IMR-90 (cell line): ENCODE measurements at regions of chr14 and their contacts with region 1.

Region 1: DNA sequence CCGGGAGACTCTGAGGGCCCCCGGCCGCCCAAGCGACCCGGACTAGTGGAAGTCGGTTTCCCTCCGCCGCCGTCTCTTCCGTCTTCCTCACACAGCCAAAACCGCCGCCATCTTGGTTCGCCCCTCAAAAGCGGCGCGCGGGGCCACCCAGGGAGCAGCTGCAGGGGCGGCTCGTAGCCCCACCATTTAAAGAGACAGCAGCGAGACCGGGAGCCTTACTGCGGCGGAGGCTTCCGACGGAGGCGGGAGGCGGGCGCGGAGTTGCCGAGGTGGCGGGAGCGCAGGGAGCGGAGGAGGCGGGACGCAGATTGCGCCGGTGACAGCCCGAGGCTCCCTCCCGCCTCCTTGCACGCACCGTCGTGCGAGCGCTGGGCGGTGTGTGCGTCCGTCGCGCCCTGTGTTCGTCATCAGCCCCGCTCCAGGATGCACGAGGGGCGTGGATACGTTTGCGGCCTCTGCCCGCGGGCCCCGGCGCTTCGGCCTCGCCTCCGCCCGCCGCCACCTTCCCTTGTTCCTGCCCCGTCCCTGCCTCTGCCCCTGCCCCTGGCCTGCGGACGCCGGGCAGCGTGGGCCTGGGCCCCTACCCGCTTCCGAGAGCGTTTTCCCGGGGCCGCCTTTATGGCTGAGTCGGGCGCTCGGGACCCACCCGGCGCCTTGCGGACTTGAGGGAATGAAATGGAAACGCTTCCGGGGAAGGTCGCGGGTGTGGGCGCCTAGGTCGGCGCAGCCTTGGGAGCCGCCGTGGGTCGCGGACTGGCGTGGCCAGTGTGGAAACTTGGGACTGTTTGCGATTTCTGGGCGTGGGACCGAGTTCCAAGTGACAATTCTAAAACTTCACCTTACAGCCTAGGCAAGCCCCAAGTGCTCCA is at the start of gene PPP4R3A:
- DNase-seq: peak; percentile 98
- ATAC-seq: peak; percentile 91
- H3K4me3 ChIP-seq: peak within 1 kb of the TSS; percentile 100
- H3K27ac ChIP-seq: peak within 1 kb of the TSS; percentile 96
- H3K4me1 ChIP-seq: peaks cover 3% of the 10 kb centered on the region; the same call in 1 of the 2 replicates
- H3K27me3 ChIP-seq: no peaks in the 10 kb centered on the region
- CTCF ChIP-seq: no peak
- POLR2A ChIP-seq: peak; percentile 94
- RAD21 ChIP-seq: no peak
- total RNA-seq, gene PPP4R3A: 28.9 and 46.4 TPM in 2 replicates

Region 2: GRCh38 chr14:91078095-91078737 is 432.2 kb before region 1 on chr14:
- CTCF ChIA-PET with region 1: no interaction called
- POLR2A ChIA-PET with region 1: no interaction called
- dilution Hi-C with region 1: no loop called
- in situ Hi-C with region 1: no loop called
- intact Hi-C with region 1: no loop called
- DNase-seq: no peak
- ATAC-seq: no peak
- H3K4me3 ChIP-seq: no peak overlapping the region
- H3K27ac ChIP-seq: no peak overlapping the region
- H3K4me1 ChIP-seq: no peaks in the 10 kb centered on the region
- H3K27me3 ChIP-seq: no peaks in the 10 kb centered on the region
- CTCF ChIP-seq: no peak
- POLR2A ChIP-seq: no peak
- RAD21 ChIP-seq: no peak

Region 3: DNA sequence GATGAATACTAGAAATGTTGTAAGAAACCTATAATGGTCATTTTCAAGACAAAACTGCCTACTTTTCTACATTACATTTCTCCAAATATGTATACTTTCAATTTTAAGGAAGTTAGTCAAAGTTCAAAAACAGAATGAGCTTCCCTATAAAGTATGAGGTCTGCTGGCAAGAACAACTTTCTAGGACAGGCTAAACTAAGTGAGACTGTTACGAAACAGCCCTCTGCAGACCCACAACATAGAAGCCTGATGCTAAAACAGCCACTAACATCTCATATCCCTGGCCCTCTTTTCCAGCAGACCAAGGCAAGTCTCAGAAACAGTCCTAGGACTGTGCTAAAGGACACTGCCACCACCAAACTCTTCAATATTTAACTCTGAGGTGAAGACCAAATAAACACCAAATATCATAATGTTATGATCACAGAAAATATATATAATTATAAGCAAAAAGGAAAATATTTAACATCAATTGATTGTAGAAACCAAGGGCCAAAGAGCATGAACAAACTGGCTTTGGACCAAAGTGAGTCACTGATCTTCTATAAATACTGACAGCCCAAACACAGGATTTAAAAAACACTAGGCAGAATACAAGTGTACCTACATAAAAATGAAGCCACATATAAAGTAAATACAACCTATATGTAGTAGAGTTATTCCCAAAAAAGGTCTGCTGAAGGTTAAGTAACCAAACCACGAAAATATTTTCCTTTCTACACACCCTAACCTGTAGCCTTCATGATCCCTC is 28.0 kb before region 1 on chr14:
- CTCF ChIA-PET with region 1: no interaction called
- POLR2A ChIA-PET with region 1: no interaction called
- dilution Hi-C with region 1: no loop called
- in situ Hi-C with region 1: no loop called
- intact Hi-C with region 1: loop called (anchors 2 kb)
- DNase-seq: peak; percentile 78
- ATAC-seq: peak; percentile 89
- H3K4me3 ChIP-seq: no peak overlapping the region
- H3K27ac ChIP-seq: peak overlapping the region; percentile 68; the same call in 1 of the 2 replicates
- H3K4me1 ChIP-seq: peaks cover 7% of the 10 kb centered on the region
- H3K27me3 ChIP-seq: no peaks in the 10 kb centered on the region
- CTCF ChIP-seq: no peak
- POLR2A ChIP-seq: no peak
- RAD21 ChIP-seq: no peak

Region 4: GRCh38 chr14:91996948-91997371 is 486.6 kb after region 1 on chr14:
- CTCF ChIA-PET with region 1: no interaction called
- POLR2A ChIA-PET with region 1: no interaction called
- dilution Hi-C with region 1: no loop called
- in situ Hi-C with region 1: no loop called
- intact Hi-C with region 1: loop called (anchors 5 kb)
- DNase-seq: peak; percentile 72
- ATAC-seq: peak; percentile 75
- H3K4me3 ChIP-seq: no peak overlapping the region
- H3K27ac ChIP-seq: no peak overlapping the region
- H3K4me1 ChIP-seq: no peaks in the 10 kb centered on the region
- H3K27me3 ChIP-seq: no peaks in the 10 kb centered on the region
- CTCF ChIP-seq: peak; percentile 66
- POLR2A ChIP-seq: no peak
- RAD21 ChIP-seq: peak; percentile 65

Region 5: GRCh38 chr14:93317875-93318807 is 1807.7 kb after region 1 on chr14:
- CTCF ChIA-PET with region 1: no interaction called
- POLR2A ChIA-PET with region 1: no interaction called
- dilution Hi-C with region 1: no loop called
- in situ Hi-C with region 1: loop called (anchors 25 kb)
- intact Hi-C with region 1: no loop called
- DNase-seq: peak; percentile 41
- ATAC-seq: peak; percentile 65
- H3K4me3 ChIP-seq: no peak overlapping the region
- H3K27ac ChIP-seq: no peak overlapping the region
- H3K4me1 ChIP-seq: peaks cover 12% of the 10 kb centered on the region
- H3K27me3 ChIP-seq: no peaks in the 10 kb centered on the region
- CTCF ChIP-seq: no peak
- POLR2A ChIP-seq: no peak
- RAD21 ChIP-seq: no peak